ENCODE measurements at regions of chr17 and their contacts with region 1.

Region 1: GRCh38 chr17:10803830-10804475 is at the start of gene TMEM238L:
- DNase-seq: no peak
- total RNA-seq, gene TMEM238L: not detected

Region 2: DNA sequence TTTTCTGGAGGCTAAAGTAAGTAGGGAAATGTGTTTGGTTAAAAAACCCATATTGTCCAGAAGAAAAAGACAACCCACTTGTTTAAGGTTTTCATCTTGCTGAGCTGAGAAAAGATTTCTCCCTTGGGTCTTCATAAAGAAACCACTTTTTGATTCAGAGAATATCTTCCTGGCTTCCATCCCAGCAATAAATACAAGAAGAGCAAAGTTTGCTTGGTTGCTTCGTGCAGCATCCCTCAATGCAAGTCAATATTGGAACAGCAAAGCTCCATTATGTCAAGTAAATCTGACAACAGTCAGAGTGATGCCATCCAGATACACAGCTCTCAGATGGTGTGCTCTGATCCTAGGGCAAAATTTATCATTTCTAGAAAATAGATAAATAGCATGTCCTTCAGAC is 152.9 kb after region 1 on chr17:
- intact Hi-C with region 1: no loop called
- DNase-seq: no peak

Region 3: GRCh38 chr17:11251561-11252107 is 447.7 kb after region 1 on chr17:
- intact Hi-C with region 1: loop called in 1 of 2 experiments (anchors 5 kb)
- DNase-seq: no peak

Measured in posterior vena cava (tissue), 2 donors.